ENCODE measurements at regions of chr9 and their contacts with region 1.

Region 1: DNA sequence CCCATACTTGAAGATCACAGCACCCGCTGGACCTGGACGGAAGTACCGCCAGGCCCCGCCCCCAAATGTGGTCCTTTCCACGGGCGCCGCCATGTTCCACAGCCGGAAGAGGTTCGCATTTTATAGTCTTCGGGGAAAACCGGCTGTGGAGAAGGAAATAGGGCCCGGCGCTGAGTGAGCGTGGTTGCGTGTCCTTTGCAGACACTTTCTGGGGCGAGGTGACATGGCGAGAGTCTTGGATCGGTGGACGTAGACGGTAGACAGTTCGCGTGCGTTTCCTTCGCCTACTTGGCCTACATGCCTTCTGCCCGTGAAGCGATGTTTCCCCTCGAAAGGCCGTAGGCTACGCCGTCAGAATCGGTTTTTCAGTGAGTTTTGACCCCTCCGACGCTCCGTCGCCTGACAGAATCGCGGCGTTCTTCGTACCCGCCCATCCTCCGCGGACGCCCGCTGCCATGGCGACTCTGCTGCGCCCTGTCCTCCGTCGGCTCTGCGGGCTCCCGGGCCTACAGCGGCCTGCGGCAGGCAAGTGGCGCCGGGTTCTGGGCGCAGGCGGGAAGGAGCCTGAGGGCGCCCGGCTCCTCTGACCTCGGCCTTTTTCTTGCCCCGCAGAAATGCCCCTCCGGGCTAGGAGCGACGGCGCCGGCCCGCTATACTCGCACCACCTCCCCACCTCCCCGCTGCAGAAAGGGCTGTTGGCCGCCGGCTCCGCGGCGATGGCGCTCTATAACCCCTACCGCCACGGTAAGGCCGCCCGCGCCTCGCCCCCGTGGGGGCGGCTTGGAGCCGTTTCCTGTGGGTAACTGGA is at the starts of genes COQ4 and TRUB2:
- DNase-seq: peak; percentile 96
- ATAC-seq: peak; percentile 90
- H3K4me3 Mint-ChIP-seq: peak within 1 kb of the TSS; percentile 87
- H3K27ac Mint-ChIP-seq: peak within 1 kb of the TSS; percentile 93
- H3K4me1 Mint-ChIP-seq: peaks cover 19% of the 10 kb centered on the region
- H3K27me3 Mint-ChIP-seq: no peaks in the 10 kb centered on the region
- total RNA-seq, gene COQ4: 32.1 to 38.8 TPM
- total RNA-seq, gene TRUB2: 29.5 to 37.5 TPM

Region 2: DNA sequence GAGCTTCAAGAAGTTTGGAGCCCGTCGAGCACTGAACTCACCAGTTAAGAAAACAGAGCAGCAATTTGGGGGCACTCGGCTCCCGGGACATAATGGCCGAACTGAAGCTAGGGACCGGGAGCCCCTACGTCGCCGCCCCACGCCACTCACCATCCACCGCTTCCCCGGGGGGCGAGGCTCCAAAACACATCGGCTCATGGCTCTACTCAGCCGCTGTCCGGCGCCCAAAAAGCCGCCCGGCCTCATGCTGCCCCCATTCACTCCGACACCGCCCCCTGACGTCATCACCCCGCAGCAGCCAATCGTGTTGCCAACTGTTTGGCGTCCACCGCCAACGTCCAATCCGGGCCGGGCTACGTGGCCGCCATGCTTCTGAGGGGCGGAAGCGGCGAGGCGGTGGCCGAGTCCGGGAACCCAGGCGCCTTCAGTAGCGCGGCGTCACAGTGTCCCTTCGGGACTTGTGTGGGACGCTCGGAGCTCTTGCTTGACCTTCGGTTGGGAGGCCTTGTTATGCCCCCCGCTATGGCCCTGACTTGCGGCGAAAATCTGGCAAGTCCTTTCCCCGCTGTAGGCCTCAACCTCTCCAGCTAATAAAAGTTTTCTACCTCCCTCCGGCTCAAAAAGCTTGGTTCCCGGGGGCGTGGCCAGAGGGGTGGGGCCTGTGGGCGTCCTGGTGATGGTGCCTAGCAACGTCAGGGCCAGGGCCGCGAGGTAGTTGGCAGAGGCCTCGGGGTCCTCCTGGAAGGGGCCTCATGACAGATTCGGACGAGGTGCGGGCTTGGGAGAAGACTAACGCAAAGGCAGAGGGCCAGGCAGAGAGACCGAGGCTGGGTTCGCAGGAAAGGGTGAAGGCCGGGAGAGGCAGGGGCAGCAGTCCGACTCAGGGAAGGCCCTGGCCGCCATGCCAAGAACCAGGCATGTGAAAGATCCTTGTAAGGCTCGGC is 606.9 kb before region 1 on chr9 and contains the starts of genes PTRH1 and TTC16:
- CTCF ChIA-PET with region 1: no interaction called
- POLR2A ChIA-PET with region 1: no interaction called
- intact Hi-C with region 1: loop called in 1 of 2 experiments (anchors 5 kb)
- DNase-seq: peak; percentile 99
- ATAC-seq: peak; percentile 97
- H3K4me3 Mint-ChIP-seq: peak within 1 kb of the TSS; percentile 92
- H3K27ac Mint-ChIP-seq: peak within 1 kb of the TSS; percentile 97
- H3K4me1 Mint-ChIP-seq: peaks cover 25% of the 10 kb centered on the region
- H3K27me3 Mint-ChIP-seq: no peaks in the 10 kb centered on the region
- total RNA-seq, gene PTRH1: 12.9 to 15.1 TPM
- total RNA-seq, gene TTC16: 0.16 to 0.30 TPM

Region 3: GRCh38 chr9:128203024-128203706 is 119.4 kb before region 1 on chr9 and contains the start of gene DNM1:
- CTCF ChIA-PET with region 1: no interaction called
- POLR2A ChIA-PET with region 1: no interaction called
- intact Hi-C with region 1: loop called in 1 of 2 experiments (anchors 1 kb)
- DNase-seq: peak; percentile 83
- ATAC-seq: peak; percentile 95
- H3K4me3 Mint-ChIP-seq: peak within 1 kb of the TSS; percentile 39
- H3K27ac Mint-ChIP-seq: peak within 1 kb of the TSS; percentile 66
- H3K4me1 Mint-ChIP-seq: peaks cover 12% of the 10 kb centered on the region
- H3K27me3 Mint-ChIP-seq: peaks cover 11% of the 10 kb centered on the region
- total RNA-seq, gene DNM1: 0.50 to 0.72 TPM

Region 4: DNA sequence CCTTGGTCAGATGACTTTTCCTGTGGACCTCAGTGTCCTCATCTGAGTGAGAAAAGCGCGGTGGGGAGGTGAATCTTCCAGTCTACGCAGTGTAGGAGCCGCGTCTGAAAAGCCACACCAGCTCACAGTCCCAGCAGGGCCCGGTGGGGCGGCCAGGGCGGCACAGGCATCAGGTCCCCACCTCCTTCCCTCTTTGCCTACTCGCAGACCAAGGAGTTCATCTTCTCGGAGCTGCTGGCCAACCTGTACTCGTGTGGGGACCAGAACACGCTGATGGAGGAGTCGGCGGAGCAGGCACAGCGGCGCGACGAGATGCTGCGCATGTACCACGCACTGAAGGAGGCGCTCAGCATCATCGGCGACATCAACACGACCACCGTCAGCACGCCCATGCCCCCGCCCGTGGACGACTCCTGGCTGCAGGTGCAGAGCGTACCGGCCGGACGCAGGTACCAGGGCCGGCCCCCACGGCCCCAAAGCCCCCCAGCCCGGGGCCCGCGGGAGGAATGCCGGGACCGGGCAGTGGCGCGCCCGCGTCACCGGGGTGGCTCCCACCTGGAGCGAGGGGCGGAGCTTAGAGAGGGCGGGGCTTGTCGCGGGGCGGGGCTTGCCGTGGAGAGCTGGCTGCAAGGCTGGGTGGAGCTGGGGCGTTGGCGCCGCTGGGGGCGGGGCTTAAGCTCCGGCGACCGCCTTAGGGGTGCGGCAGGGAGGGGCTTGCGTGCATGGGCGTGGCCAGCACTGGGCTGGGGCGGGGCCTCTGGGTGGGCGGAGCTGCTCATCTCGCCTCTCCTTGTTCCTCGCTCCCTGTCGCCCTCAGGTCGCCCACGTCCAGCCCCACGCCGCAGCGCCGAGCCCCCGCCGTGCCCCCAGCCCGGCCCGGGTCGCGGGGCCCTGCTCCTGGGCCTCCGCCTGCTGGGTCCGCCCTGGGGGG is 72.4 kb before region 1 on chr9:
- CTCF ChIA-PET with region 1: no interaction called
- POLR2A ChIA-PET with region 1: no interaction called
- intact Hi-C with region 1: loop called in 1 of 2 experiments (anchors 1 kb)
- DNase-seq: peak; percentile 99
- ATAC-seq: peak; percentile 98
- H3K4me3 Mint-ChIP-seq: peak overlapping the region; percentile 78
- H3K27ac Mint-ChIP-seq: peak overlapping the region; percentile 42
- H3K4me1 Mint-ChIP-seq: peaks cover 7% of the 10 kb centered on the region
- H3K27me3 Mint-ChIP-seq: peaks cover 10% of the 10 kb centered on the region

Region 5: DNA sequence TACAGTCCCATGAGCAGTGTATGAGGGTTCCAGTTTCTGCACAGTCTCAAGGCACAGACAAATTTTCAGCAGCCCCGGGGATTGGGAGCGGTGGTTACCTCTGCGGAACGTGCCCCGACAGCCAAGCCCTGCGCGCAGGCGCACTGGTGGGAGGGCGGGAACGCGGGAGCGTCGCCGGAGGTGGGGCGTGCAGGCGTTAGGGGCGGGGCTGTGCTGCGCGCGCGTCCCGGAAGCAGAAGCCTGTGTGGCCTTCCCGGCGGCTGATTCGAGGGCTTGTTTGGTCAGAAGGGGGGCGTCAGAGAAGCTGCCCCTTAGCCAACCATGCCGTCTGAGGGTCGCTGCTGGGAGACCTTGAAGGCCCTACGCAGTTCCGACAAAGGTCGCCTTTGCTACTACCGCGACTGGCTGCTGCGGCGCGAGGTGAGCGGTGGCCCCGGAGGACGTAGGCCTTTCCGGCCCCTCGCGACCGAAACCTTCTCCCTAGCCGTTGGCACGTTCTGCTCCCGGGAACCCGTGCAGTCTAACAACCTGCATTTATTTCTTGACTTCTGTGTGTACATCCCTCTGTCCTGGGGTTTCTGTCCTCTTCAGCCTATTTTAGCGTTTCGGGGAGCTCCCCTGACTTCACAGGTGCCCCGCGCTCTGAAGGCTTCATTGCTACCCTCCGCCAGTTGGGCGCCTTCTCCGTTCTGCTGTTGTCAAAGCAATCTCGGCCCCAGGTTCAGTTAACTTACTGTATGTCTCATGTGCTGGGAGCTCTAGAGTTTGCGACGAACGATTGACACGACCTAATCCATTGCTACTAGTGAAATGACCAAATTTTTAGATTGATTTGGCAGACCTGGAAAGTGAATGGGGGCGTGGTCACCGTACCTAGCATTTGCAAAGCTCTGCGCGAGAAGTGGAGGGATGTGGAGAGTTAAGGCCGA is 182.1 kb after region 1 on chr9 and contains the start of gene GLE1:
- CTCF ChIA-PET with region 1: no interaction called
- POLR2A ChIA-PET with region 1: no interaction called
- intact Hi-C with region 1: loop called in 1 of 2 experiments (anchors 1 kb)
- DNase-seq: peak; percentile 98
- ATAC-seq: peak; percentile 99
- H3K4me3 Mint-ChIP-seq: peak within 1 kb of the TSS; percentile 95
- H3K27ac Mint-ChIP-seq: peak within 1 kb of the TSS; percentile 99
- H3K4me1 Mint-ChIP-seq: peaks cover 21% of the 10 kb centered on the region
- H3K27me3 Mint-ChIP-seq: no peaks in the 10 kb centered on the region
- total RNA-seq, gene GLE1: 52.5 to 54.4 TPM

Region 6: GRCh38 chr9:128688512-128689292 is 366.1 kb after region 1 on chr9 and contains the start of gene SET:
- CTCF ChIA-PET with region 1: no interaction called
- POLR2A ChIA-PET with region 1: no interaction called
- intact Hi-C with region 1: loop called in 1 of 2 experiments (anchors 1 kb)
- DNase-seq: peak; percentile 96
- ATAC-seq: peak; percentile 71
- H3K4me3 Mint-ChIP-seq: peak within 1 kb of the TSS; percentile 99
- H3K27ac Mint-ChIP-seq: peak within 1 kb of the TSS; percentile 94
- H3K4me1 Mint-ChIP-seq: peaks cover 61% of the 10 kb centered on the region
- H3K27me3 Mint-ChIP-seq: no peaks in the 10 kb centered on the region
- total RNA-seq, gene SET: 673 to 682 TPM

Region 7: GRCh38 chr9:128786681-128787601 is 464.3 kb after region 1 on chr9 and contains the start of gene TBC1D13:
- CTCF ChIA-PET with region 1: no interaction called
- POLR2A ChIA-PET with region 1: no interaction called
- intact Hi-C with region 1: loop called in 1 of 2 experiments (anchors 1 kb)
- DNase-seq: peak; percentile 94
- ATAC-seq: peak; percentile 97
- H3K4me3 Mint-ChIP-seq: peak within 1 kb of the TSS; percentile 87
- H3K27ac Mint-ChIP-seq: peak within 1 kb of the TSS; percentile 87
- H3K4me1 Mint-ChIP-seq: peaks cover 18% of the 10 kb centered on the region
- H3K27me3 Mint-ChIP-seq: no peaks in the 10 kb centered on the region
- total RNA-seq, gene TBC1D13: 10.5 to 14.0 TPM

Measured in activated CD4-positive, alpha-beta T cell treated with anti-CD3 and anti-CD28 coated beads for 36 hours (primary cell).